ENCODE measurements at regions of chr2 and their contacts with region 1.

Region 1: GRCh38 chr2:201118121-201118960 is 2.4 kb downstream of the CFLAR start:
- DNase-seq: peak; percentile 80 to 91 (median 83)
- ATAC-seq: peak; percentile 41 to 69 (median 64)
- H3K4me3 ChIP-seq: peak overlapping the region; percentile 21 to 93 (median 61)
- H3K27ac ChIP-seq: peak overlapping the region; percentile 99 to 100 (median 100)
- H3K4me1 ChIP-seq: peaks cover 12 to 32% (median 17%) of the 10 kb centered on the region in 3 donors
- H3K27me3 ChIP-seq: no peaks in the 10 kb centered on the region
- CTCF ChIP-seq: peak in 3 of 4 donors; percentile 9 to 17 (median 12)

Region 2: GRCh38 chr2:201158111-201158929 is 40.0 kb after region 1 on chr2:
- intact Hi-C with region 1: loop called in 1 of 3 experiments (anchors 5 kb)
- DNase-seq: peak in 3 of 6 donors; percentile 61 to 81 (median 72)
- ATAC-seq: peak; percentile 91 to 95 (median 92)
- H3K4me3 ChIP-seq: no peak overlapping the region
- H3K27ac ChIP-seq: peak overlapping the region; percentile 11 to 71 (median 49)
- H3K4me1 ChIP-seq: peaks cover 6 to 16% (median 7%) of the 10 kb centered on the region in 3 donors
- H3K27me3 ChIP-seq: no peaks in the 10 kb centered on the region
- CTCF ChIP-seq: peak; percentile 37 to 48 (median 45)